ENCODE measurements at regions of chr12 and their contacts with region 1.

Region 1: DNA sequence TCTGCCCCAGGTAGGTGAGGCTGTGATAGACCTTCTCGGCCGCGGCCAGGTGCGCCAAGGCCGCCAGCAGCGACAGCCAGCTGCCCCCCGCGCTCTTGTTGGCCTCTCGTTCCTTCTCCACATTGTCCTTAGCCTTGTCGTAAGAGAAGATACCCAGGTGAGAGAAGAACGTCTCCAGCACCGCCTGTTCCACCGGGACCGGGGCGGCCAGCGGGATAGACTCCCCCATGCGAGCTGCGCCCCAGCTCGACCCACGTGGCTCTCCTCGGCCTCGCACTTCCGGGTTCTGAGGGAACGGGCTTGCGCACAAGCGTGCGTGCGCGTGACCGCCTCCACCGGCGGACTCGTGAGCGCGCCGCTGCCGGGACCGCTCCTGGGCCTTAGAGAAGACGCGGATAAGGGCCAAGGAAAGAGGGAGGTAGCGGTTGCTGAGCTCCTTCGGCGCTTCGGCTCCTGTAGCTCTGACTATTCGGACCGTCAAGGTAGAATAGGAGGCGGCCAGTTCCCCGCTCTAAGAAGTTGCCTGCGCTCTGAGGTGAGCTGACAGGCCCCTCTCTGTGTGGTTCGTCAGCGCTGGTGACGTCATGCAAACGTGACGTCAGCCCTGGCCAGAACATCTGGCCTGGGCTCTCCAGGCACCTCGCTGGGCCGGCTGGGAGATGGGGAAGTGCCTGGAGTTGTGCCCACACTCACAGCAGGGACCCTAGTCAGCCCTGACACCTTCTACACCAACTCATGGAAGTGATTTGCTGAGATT is at the start of gene KICS2:
- DNase-seq: peak; percentile 89 to 95 (median 93)
- ATAC-seq: peak; percentile 96
- H3K4me3 ChIP-seq: peak within 1 kb of the TSS; percentile 87
- H3K4me3 Mint-ChIP-seq: peak within 1 kb of the TSS; percentile 86 to 100 (median 98)
- H3K27ac ChIP-seq: peak within 1 kb of the TSS; percentile 92
- H3K27ac Mint-ChIP-seq: peak within 1 kb of the TSS; percentile 94 to 100 (median 98)
- H3K4me1 ChIP-seq: peaks cover 8 to 19% of the 10 kb centered on the region in 2 donors
- H3K4me1 Mint-ChIP-seq: peaks cover 17 to 51% (median 41%) of the 10 kb centered on the region in 7 donors
- H3K27me3 ChIP-seq: no peaks in the 10 kb centered on the region
- H3K27me3 Mint-ChIP-seq: peaks cover 0 to 21% (median 8%) of the 10 kb centered on the region in 5 donors
- total RNA-seq, gene KICS2: 11.7 to 26.9 (median 19.5) TPM

Region 2: DNA sequence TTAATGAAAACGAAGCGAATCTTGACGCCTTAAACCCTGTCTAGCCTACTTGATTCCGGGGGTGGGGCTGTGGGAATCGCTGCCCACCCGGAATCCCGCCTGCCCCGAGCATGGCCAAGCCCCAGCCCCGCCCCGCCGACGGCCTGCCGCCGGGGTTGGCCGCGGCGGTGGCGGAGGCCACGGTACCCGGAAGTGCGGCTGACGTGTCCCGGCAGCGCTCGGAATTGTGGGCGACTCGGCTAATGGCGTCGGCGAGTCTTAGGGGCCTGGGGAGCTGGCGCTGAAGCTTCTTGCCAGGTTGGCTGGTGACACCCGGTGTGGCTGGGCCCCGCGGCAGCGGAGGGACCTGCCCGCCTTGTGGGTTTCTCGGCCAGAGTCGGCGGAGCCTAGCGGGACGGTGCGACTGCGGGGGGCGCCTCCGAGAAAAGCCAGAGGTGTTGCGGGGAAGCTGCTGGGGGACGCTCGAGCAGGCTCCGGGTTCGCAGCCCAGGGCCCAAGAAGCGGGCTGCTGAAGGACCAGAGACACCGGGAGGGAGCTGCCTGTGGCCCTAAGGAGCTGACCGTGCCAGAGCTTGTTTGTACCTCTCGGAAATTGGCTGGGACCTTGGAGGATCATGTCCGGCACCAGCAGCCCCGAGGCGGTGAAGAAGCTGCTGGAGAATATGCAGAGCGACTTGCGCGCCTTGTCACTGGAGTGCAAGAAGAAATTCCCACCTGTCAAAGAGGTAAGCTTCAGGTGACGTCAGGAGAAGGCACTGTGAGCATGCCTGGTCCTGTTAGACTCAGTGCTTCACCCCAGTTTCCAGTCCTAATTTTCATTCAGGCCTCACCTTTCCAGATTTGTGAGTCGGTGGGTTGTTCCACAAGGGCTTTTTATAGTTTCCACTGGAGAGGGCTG is 1755.3 kb before region 1 on chr12 and contains the start of gene MON2:
- CTCF ChIA-PET with region 1: no interaction called
- POLR2A ChIA-PET with region 1: no interaction called
- intact Hi-C with region 1: loop called in 1 of 2 experiments (anchors 2 kb)
- DNase-seq: peak; percentile 79 to 89 (median 84)
- ATAC-seq: peak; percentile 98
- H3K4me3 ChIP-seq: peak within 1 kb of the TSS; percentile 90
- H3K4me3 Mint-ChIP-seq: peak within 1 kb of the TSS; percentile 85 to 99 (median 94)
- H3K27ac ChIP-seq: peak within 1 kb of the TSS; percentile 88
- H3K27ac Mint-ChIP-seq: peak within 1 kb of the TSS; percentile 86 to 98 (median 96)
- H3K4me1 ChIP-seq: peaks cover 8 to 17% of the 10 kb centered on the region in 2 donors
- H3K4me1 Mint-ChIP-seq: peaks cover 12 to 30% (median 21%) of the 10 kb centered on the region in 7 donors
- H3K27me3 ChIP-seq: peaks cover 0 to 4% of the 10 kb centered on the region in 2 donors
- H3K27me3 Mint-ChIP-seq: peaks cover 0 to 4% (median 3%) of the 10 kb centered on the region in 5 donors
- total RNA-seq, gene MON2: 50.0 to 96.3 (median 76.0) TPM

Region 3: DNA sequence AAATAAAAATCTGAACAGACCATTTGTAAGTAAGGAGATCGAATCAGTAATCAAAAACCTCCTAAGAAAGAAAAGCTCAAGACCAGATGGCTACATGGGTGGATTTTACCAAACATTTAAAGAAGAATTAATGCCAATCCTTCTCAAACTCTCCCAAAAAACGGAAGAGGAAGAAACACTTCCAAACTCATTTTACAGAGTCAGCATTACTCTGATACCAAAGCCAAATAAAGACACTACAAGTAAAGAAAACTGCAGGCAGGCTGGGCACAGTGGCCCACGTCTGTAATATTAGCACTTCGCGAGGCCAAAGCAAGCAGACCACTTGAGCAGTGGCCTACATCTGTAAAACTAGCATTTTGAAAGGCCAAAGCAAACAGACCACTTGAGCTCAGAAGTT is 713.6 kb before region 1 on chr12:
- CTCF ChIA-PET with region 1: no interaction called
- POLR2A ChIA-PET with region 1: no interaction called
- intact Hi-C with region 1: no loop called
- DNase-seq: no peak
- ATAC-seq: no peak
- H3K4me3 ChIP-seq: no peak overlapping the region
- H3K4me3 Mint-ChIP-seq: no peak overlapping the region
- H3K27ac ChIP-seq: no peak overlapping the region
- H3K27ac Mint-ChIP-seq: no peak overlapping the region
- H3K4me1 ChIP-seq: no peaks in the 10 kb centered on the region
- H3K4me1 Mint-ChIP-seq: no peaks in the 10 kb centered on the region
- H3K27me3 ChIP-seq: no peaks in the 10 kb centered on the region
- H3K27me3 Mint-ChIP-seq: no peaks in the 10 kb centered on the region

Region 4: DNA sequence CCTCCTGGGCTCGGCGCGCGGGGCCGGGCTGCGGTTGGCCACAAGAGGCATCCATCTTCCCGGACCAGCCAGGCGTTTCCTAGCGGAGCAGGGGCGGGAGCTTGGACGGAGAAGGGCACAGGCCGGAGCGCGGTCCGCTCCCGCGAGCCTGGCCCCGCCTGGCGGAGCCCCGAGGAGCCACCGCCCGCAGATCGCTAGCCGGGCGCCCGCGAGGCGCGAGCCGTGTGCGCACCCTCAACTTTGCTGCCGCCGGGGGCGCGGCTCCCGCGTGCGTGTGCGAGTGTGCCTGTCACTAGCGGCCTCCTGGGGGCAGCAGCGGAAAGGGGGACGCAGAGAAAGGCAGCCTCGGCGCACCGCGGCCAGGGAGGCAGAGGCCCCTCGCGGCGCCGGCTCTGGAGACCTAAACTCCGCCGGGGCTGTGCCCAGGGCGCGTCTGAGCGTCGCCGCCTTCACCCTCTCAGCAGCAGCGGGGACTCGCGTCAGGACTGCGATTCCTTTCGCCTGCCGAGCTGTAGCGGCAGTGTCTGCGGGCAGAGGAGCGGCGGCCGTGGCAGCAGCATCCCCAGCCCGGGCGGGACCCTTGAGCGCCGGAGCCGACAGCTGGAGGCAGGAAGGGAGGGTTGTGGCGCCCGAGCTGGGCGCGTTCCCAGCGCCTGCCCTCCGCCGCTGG is 378.3 kb before region 1 on chr12:
- CTCF ChIA-PET with region 1: no interaction called
- POLR2A ChIA-PET with region 1: no interaction called
- intact Hi-C with region 1: loop called (anchors 1 kb)
- DNase-seq: peak; percentile 50 to 76 (median 70)
- ATAC-seq: peak; percentile 97
- H3K4me3 ChIP-seq: peak overlapping the region; percentile 57
- H3K4me3 Mint-ChIP-seq: peak overlapping the region; percentile 32 to 93 (median 67)
- H3K27ac ChIP-seq: no peak overlapping the region
- H3K27ac Mint-ChIP-seq: no peak overlapping the region
- H3K4me1 ChIP-seq: no peaks in the 10 kb centered on the region
- H3K4me1 Mint-ChIP-seq: peaks cover 0 to 12% (median 10%) of the 10 kb centered on the region in 7 donors
- H3K27me3 ChIP-seq: peaks cover 3 to 11% of the 10 kb centered on the region in 2 donors
- H3K27me3 Mint-ChIP-seq: peaks cover 17 to 47% (median 35%) of the 10 kb centered on the region in 5 donors

Region 5: GRCh38 chr12:64392221-64392620 is 170.0 kb after region 1 on chr12:
- CTCF ChIA-PET with region 1: no interaction called
- POLR2A ChIA-PET with region 1: no interaction called
- intact Hi-C with region 1: loop called (anchors 2 to 5 kb)
- DNase-seq: peak in 6 of 9 donors; percentile 18 to 52 (median 42)
- ATAC-seq: peak; percentile 57
- H3K4me3 ChIP-seq: no peak overlapping the region
- H3K4me3 Mint-ChIP-seq: peak overlapping the region; percentile 21 to 86 (median 52)
- H3K27ac ChIP-seq: no peak overlapping the region
- H3K27ac Mint-ChIP-seq: no peak overlapping the region
- H3K4me1 ChIP-seq: no peaks in the 10 kb centered on the region
- H3K4me1 Mint-ChIP-seq: peaks cover 2 to 26% (median 17%) of the 10 kb centered on the region in 7 donors
- H3K27me3 ChIP-seq: no peaks in the 10 kb centered on the region
- H3K27me3 Mint-ChIP-seq: peaks cover 0 to 22% (median 0%) of the 10 kb centered on the region in 5 donors

Region 6: GRCh38 chr12:64431791-64432190 is 209.6 kb after region 1 on chr12:
- CTCF ChIA-PET with region 1: no interaction called
- POLR2A ChIA-PET with region 1: no interaction called
- intact Hi-C with region 1: no loop called
- DNase-seq: no peak
- ATAC-seq: no peak
- H3K4me3 ChIP-seq: no peak overlapping the region
- H3K4me3 Mint-ChIP-seq: no peak overlapping the region
- H3K27ac ChIP-seq: no peak overlapping the region
- H3K27ac Mint-ChIP-seq: no peak overlapping the region
- H3K4me1 ChIP-seq: no peaks in the 10 kb centered on the region
- H3K4me1 Mint-ChIP-seq: peaks cover 0 to 6% (median 0%) of the 10 kb centered on the region in 7 donors
- H3K27me3 ChIP-seq: no peaks in the 10 kb centered on the region
- H3K27me3 Mint-ChIP-seq: no peaks in the 10 kb centered on the region

Region 7: GRCh38 chr12:64451687-64452558 is 229.7 kb after region 1 on chr12 and contains the start of gene TBK1:
- CTCF ChIA-PET with region 1: no interaction called
- POLR2A ChIA-PET with region 1: interaction called, 7 read pairs
- intact Hi-C with region 1: loop called (anchors 1 kb)
- DNase-seq: peak in 8 of 9 donors; percentile 21 to 80 (median 34)
- ATAC-seq: peak; percentile 78
- H3K4me3 ChIP-seq: peak within 1 kb of the TSS; percentile 61
- H3K4me3 Mint-ChIP-seq: peak within 1 kb of the TSS; percentile 90 to 99 (median 94)
- H3K27ac ChIP-seq: peak within 1 kb of the TSS; percentile 74
- H3K27ac Mint-ChIP-seq: peak within 1 kb of the TSS; percentile 86 to 95 (median 94)
- H3K4me1 ChIP-seq: peaks cover 19 to 24% of the 10 kb centered on the region in 2 donors
- H3K4me1 Mint-ChIP-seq: peaks cover 20 to 54% (median 41%) of the 10 kb centered on the region in 7 donors
- H3K27me3 ChIP-seq: no peaks in the 10 kb centered on the region
- H3K27me3 Mint-ChIP-seq: no peaks in the 10 kb centered on the region
- total RNA-seq, gene TBK1: 9.0 to 34.0 (median 12.1) TPM

Region 8: GRCh38 chr12:64583771-64584421 is 361.7 kb after region 1 on chr12:
- CTCF ChIA-PET with region 1: no interaction called
- POLR2A ChIA-PET with region 1: no interaction called
- intact Hi-C with region 1: no loop called
- DNase-seq: peak in 4 of 9 donors; percentile 16 to 37 (median 26)
- ATAC-seq: peak; percentile 48
- H3K4me3 ChIP-seq: peak overlapping the region; percentile 25
- H3K4me3 Mint-ChIP-seq: peak overlapping the region; percentile 29 to 90 (median 78)
- H3K27ac ChIP-seq: peak overlapping the region; percentile 21
- H3K27ac Mint-ChIP-seq: peak overlapping the region; percentile 42 to 94 (median 82)
- H3K4me1 ChIP-seq: peaks cover 6 to 25% of the 10 kb centered on the region in 2 donors
- H3K4me1 Mint-ChIP-seq: peaks cover 18 to 43% (median 32%) of the 10 kb centered on the region in 7 donors
- H3K27me3 ChIP-seq: no peaks in the 10 kb centered on the region
- H3K27me3 Mint-ChIP-seq: peaks cover 0 to 4% (median 0%) of the 10 kb centered on the region in 5 donors

Region 9: GRCh38 chr12:66130277-66131066 is 1908.3 kb after region 1 on chr12 and contains the start of gene LLPH:
- CTCF ChIA-PET with region 1: no interaction called
- POLR2A ChIA-PET with region 1: interaction called, 3 read pairs
- intact Hi-C with region 1: loop called in 1 of 2 experiments (anchors 10 kb)
- DNase-seq: peak; percentile 72 to 88 (median 86)
- ATAC-seq: peak; percentile 97
- H3K4me3 ChIP-seq: peak within 1 kb of the TSS; percentile 99
- H3K4me3 Mint-ChIP-seq: peak within 1 kb of the TSS; percentile 92 to 98 (median 97)
- H3K27ac ChIP-seq: peak within 1 kb of the TSS; percentile 87
- H3K27ac Mint-ChIP-seq: peak within 1 kb of the TSS; percentile 95 to 99 (median 97)
- H3K4me1 ChIP-seq: peaks cover 19 to 23% of the 10 kb centered on the region in 2 donors
- H3K4me1 Mint-ChIP-seq: peaks cover 37 to 76% (median 63%) of the 10 kb centered on the region in 7 donors
- H3K27me3 ChIP-seq: no peaks in the 10 kb centered on the region
- H3K27me3 Mint-ChIP-seq: no peaks in the 10 kb centered on the region
- total RNA-seq, gene LLPH: 14.7 to 29.1 (median 28.4) TPM

Measured in naive thymus-derived CD4-positive, alpha-beta T cell (primary cell).